ENCODE measurements at regions of chr7 and their contacts with region 1.

Region 1: GRCh38 chr7:116236020-116236630 is 25.8 kb downstream of the TES start:
- DNase-seq: no peak
- H3K4me3 ChIP-seq: no peak overlapping the region
- H3K27ac ChIP-seq: no peak overlapping the region
- H3K4me1 ChIP-seq: peaks cover 8 to 65% (median 26%) of the 10 kb centered on the region in 6 donors
- H3K27me3 ChIP-seq: no peaks in the 10 kb centered on the region
- CTCF ChIP-seq: peak; percentile 9 to 65 (median 46)
- POLR2A ChIP-seq: no peak

Region 2: DNA sequence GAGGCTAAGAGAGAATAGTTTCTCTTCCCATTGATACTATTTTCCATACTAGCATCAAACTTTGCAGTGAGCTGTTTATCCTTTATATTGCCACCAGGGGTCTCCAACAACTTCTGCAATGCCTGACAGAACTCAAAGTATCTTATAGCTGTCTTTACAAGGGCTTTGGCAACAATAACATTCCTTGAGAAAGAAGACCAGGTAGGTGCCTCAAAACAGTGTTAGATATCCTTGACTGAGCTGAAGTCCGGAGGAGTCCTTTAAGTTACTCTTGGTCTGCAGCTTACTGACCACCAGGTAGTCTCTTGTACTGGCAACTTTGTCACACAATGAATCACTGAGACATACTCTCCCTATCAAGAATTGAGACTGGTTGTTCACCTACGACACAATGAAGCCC is 55.8 kb before region 1 on chr7:
- intact Hi-C with region 1: loop called (anchors 5 kb)
- DNase-seq: no peak
- H3K4me3 ChIP-seq: no peak overlapping the region
- H3K27ac ChIP-seq: no peak overlapping the region
- H3K4me1 ChIP-seq: no peaks in the 10 kb centered on the region
- H3K27me3 ChIP-seq: no peaks in the 10 kb centered on the region
- CTCF ChIP-seq: peak; percentile 59 to 83 (median 76)
- POLR2A ChIP-seq: no peak

Measured in spleen (tissue), 13 donors.